Heart right ventricle (tissue), 16 donors: ENCODE measurements at regions of chr19 and their contacts with region 1.

Region 1: GRCh38 chr19:3783660-3784584 is 2.3 kb downstream of the MATK start:
- DNase-seq: no peak
- ATAC-seq: peak in 4 of 8 donors; percentile 15 to 59 (median 35)
- H3K4me3 ChIP-seq: no peak overlapping the region
- H3K27ac ChIP-seq: no peak overlapping the region
- H3K4me1 ChIP-seq: peaks cover 0 to 12% (median 3%) of the 10 kb centered on the region in 9 donors
- H3K27me3 ChIP-seq: peaks cover 19 to 48% (median 45%) of the 10 kb centered on the region in 7 donors
- CTCF ChIP-seq: peak in 7 of 9 donors; percentile 21 to 50 (median 37)

Region 2: DNA sequence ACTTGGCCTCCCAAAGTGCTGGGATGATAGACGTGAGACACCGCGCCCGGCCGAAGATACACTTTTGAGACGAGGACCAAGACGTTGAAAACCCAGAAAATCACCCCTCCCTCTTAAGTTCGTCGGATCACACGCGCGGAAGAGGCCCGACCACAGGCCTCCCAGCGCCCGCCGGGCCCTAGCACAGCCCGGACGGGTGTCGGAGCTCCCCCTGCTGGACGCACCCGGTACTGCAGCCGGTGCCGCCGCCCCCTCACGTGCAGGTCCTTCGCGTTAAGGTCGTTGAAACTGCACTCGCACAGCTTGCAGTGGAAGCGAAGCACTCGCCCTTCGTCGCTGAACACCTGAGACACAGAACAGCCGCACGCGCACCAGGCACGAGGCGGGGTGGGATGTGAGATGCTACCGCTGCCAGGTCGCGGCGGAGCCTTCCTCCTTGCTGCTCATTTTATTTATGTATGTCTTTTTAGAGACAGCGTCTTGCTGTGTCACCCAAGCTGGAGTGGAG is 38.0 kb after region 1 on chr19:
- intact Hi-C with region 1: loop called in 2 of 10 experiments (anchors 5 kb)
- DNase-seq: peak; percentile 38 to 76
- ATAC-seq: peak; percentile 68 to 85 (median 78)
- H3K4me3 ChIP-seq: no peak overlapping the region
- H3K27ac ChIP-seq: no peak overlapping the region
- H3K4me1 ChIP-seq: peaks cover 0 to 17% (median 5%) of the 10 kb centered on the region in 9 donors
- H3K27me3 ChIP-seq: peaks cover 0 to 14% (median 0%) of the 10 kb centered on the region in 7 donors
- CTCF ChIP-seq: peak; percentile 97 to 100 (median 99)

Region 3: GRCh38 chr19:3868770-3869456 is 85.0 kb after region 1 on chr19 and contains the start of gene ZFR2:
- intact Hi-C with region 1: no loop called
- DNase-seq: no peak
- ATAC-seq: no peak
- H3K4me3 ChIP-seq: no peak within 1 kb of the TSS
- H3K27ac ChIP-seq: no peak within 1 kb of the TSS
- H3K4me1 ChIP-seq: peaks cover 0 to 5% (median 0%) of the 10 kb centered on the region in 9 donors
- H3K27me3 ChIP-seq: peaks cover 19 to 79% (median 62%) of the 10 kb centered on the region in 7 donors
- CTCF ChIP-seq: no peak
- total RNA-seq, gene ZFR2: 0.04 to 0.29 TPM in 2 of 10 donors, not detected in the others